IMR-90 (cell line): ENCODE measurements at regions of chrX and their contacts with region 1.

Region 1: GRCh38 chrX:77899081-77899828 is at the start of gene COX7B:
- DNase-seq: peak; percentile 96
- ATAC-seq: peak; percentile 79
- H3K4me3 ChIP-seq: peak within 1 kb of the TSS; percentile 92
- H3K27ac ChIP-seq: peak within 1 kb of the TSS; percentile 71
- H3K4me1 ChIP-seq: no peaks in the 10 kb centered on the region
- H3K27me3 ChIP-seq: no peaks in the 10 kb centered on the region
- CTCF ChIP-seq: peak; percentile 56
- POLR2A ChIP-seq: peak; percentile 90
- RAD21 ChIP-seq: peak; percentile 39
- total RNA-seq, gene COX7B: 330 and 336 TPM in 2 replicates

Region 2: DNA sequence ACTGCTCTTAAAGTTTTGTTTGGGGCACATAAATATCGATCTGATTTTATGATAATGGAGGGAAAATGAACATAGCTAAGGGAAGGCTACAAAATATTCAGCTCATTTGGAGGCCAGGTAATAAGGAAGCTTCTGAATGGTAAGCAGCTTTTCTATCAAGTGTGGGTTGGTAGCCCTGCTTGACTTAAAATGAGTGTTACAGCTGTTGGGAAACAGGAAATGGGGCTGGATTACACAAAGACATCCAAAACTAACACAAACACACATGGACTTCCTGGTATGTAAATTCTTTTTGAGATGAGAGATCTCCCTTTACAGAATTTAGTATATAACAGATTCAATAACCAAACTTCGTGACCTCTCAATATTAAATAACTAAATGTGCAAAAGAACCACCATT is 394.0 kb before region 1 on chrX:
- CTCF ChIA-PET with region 1: no interaction called
- POLR2A ChIA-PET with region 1: no interaction called
- dilution Hi-C with region 1: no loop called
- in situ Hi-C with region 1: no loop called
- intact Hi-C with region 1: loop called (anchors 10 kb)
- DNase-seq: peak; percentile 69
- ATAC-seq: peak; percentile 83
- H3K4me3 ChIP-seq: no peak overlapping the region
- H3K27ac ChIP-seq: no peak overlapping the region
- H3K4me1 ChIP-seq: no peaks in the 10 kb centered on the region
- H3K27me3 ChIP-seq: no peaks in the 10 kb centered on the region
- CTCF ChIP-seq: no peak
- POLR2A ChIP-seq: no peak
- RAD21 ChIP-seq: no peak

Region 3: GRCh38 chrX:77640702-77641101 is 258.6 kb before region 1 on chrX:
- CTCF ChIA-PET with region 1: no interaction called
- POLR2A ChIA-PET with region 1: no interaction called
- dilution Hi-C with region 1: no loop called
- in situ Hi-C with region 1: no loop called
- intact Hi-C with region 1: loop called (anchors 5 kb)
- DNase-seq: no peak
- ATAC-seq: no peak
- H3K4me3 ChIP-seq: no peak overlapping the region
- H3K27ac ChIP-seq: no peak overlapping the region
- H3K4me1 ChIP-seq: no peaks in the 10 kb centered on the region
- H3K27me3 ChIP-seq: no peaks in the 10 kb centered on the region
- CTCF ChIP-seq: no peak
- POLR2A ChIP-seq: no peak
- RAD21 ChIP-seq: no peak

Region 4: DNA sequence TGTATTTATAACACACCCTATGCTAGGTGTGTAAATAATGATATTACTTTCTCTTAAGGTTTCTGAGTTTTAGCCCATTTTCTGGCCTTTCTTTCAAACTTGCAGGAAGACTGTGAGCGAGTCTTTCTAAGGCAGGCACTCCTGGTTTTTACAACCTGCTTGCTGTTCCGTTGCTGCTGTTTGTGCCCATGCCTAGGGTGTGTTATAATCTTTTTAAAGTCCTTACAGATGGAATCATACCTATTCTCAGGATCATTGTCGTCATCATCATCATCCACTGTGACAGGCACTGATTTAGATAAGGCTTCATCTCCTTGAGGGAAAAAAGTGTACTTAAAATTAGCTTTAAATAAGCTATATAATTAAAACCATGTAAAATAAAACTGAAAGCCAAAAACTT is 223.3 kb before region 1 on chrX:
- CTCF ChIA-PET with region 1: no interaction called
- POLR2A ChIA-PET with region 1: no interaction called
- dilution Hi-C with region 1: no loop called
- in situ Hi-C with region 1: no loop called
- intact Hi-C with region 1: no loop called
- DNase-seq: no peak
- ATAC-seq: no peak
- H3K4me3 ChIP-seq: no peak overlapping the region
- H3K27ac ChIP-seq: no peak overlapping the region
- H3K4me1 ChIP-seq: no peaks in the 10 kb centered on the region
- H3K27me3 ChIP-seq: no peaks in the 10 kb centered on the region
- CTCF ChIP-seq: no peak
- POLR2A ChIP-seq: no peak
- RAD21 ChIP-seq: no peak

Region 5: DNA sequence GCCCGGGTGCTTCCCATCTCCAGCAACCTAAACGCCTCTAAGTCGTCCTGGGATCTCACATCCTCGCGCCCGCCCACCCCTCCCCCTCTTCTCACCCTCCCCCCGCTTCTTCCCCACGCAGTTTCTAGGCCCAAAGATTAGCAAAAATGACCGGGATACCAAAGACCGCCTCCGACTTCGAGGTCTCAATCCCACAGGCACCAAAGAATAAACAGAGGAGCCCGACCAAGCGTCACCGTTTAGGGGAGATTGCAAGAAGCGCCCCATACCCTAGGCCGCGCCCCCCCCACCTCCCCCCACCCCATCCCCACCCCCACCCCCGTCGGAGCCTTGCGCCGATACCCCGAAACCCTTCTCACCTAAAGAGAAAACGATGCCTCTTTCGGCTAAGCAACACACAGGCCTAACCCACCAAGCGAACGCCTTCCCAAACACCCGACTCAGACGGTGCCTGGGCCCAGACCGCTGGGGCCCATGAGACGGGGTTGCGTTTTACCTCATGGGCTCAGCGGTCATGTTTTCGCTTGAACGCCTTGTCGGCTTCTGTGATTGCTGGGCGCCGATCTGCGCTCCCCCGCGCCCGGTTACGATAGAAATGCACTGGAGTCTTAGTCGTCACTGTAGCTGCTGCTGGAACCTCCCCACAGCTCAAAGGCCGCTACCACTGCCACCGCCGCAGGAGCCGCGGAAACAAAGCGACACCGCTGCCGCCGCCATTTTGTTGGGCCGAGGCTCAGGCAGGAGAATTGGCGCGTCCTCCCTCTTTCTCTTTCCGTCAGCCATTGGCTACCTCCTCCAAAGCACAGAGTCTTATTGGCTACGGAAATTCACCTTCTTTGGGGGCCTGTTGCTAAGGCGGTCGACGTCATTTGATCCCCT is 113.5 kb before region 1 on chrX and contains the start of gene ATRX:
- CTCF ChIA-PET with region 1: interaction called, 5 read pairs
- POLR2A ChIA-PET with region 1: no interaction called
- dilution Hi-C with region 1: no loop called
- in situ Hi-C with region 1: no loop called
- intact Hi-C with region 1: loop called (anchors 10 kb)
- DNase-seq: peak; percentile 79
- ATAC-seq: peak; percentile 95
- H3K4me3 ChIP-seq: peak within 1 kb of the TSS; percentile 71
- H3K27ac ChIP-seq: peak within 1 kb of the TSS; percentile 95
- H3K4me1 ChIP-seq: no peaks in the 10 kb centered on the region
- H3K27me3 ChIP-seq: no peaks in the 10 kb centered on the region
- CTCF ChIP-seq: no peak
- POLR2A ChIP-seq: peak; percentile 86
- RAD21 ChIP-seq: no peak
- total RNA-seq, gene ATRX: 73.8 and 96.1 TPM in 2 replicates

Region 6: GRCh38 chrX:78092296-78092695 is 193.0 kb after region 1 on chrX:
- CTCF ChIA-PET with region 1: interaction called, 4 read pairs
- POLR2A ChIA-PET with region 1: no interaction called
- dilution Hi-C with region 1: no loop called
- in situ Hi-C with region 1: no loop called
- intact Hi-C with region 1: loop called (anchors 1 kb)
- DNase-seq: peak; percentile 71
- ATAC-seq: peak; percentile 94
- H3K4me3 ChIP-seq: no peak overlapping the region
- H3K27ac ChIP-seq: peak overlapping the region; percentile 45; the same call in 1 of the 2 replicates
- H3K4me1 ChIP-seq: peaks cover 2% of the 10 kb centered on the region; the same call in 1 of the 2 replicates
- H3K27me3 ChIP-seq: no peaks in the 10 kb centered on the region
- CTCF ChIP-seq: peak; percentile 66
- POLR2A ChIP-seq: no peak
- RAD21 ChIP-seq: peak; percentile 75